Activated CD4-positive, alpha-beta T cell treated with anti-CD3 and anti-CD28 coated beads, Interleukin-2, amount 10 ng/mL, durations not matched to agents 7 days and 5 days (primary cell): ENCODE measurements at regions of chr17 and their contacts with region 1.

Region 1: DNA sequence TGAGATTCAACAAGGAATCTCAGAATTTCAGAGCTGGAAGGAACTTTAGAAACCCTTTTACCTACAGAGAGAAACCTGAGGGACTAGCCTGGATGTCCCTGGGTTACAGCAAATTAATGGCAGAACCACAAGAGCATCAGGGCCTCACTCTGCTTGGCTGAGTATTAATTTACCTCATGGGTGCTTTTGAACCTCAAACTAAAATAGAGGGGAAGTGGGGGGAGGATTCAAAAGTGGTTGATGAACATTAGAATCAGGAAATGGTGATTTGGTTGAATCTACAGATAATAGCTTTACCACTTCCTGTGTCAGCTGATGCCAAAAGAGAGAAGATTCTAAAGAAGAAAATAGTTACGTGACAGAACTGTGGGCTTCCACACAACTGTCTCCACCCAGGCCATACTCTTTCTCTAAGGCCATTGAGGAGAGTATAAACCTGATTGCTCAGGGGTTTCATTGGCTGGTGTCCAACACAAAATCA is 11.3 kb upstream of the SKAP1 start:
- DNase-seq: peak; percentile 69
- H3K4me3 Mint-ChIP-seq: peak overlapping the region; percentile 65
- H3K27ac Mint-ChIP-seq: peak overlapping the region; percentile 95
- H3K4me1 Mint-ChIP-seq: peaks cover 92% of the 10 kb centered on the region
- H3K27me3 Mint-ChIP-seq: no peaks in the 10 kb centered on the region

Region 2: DNA sequence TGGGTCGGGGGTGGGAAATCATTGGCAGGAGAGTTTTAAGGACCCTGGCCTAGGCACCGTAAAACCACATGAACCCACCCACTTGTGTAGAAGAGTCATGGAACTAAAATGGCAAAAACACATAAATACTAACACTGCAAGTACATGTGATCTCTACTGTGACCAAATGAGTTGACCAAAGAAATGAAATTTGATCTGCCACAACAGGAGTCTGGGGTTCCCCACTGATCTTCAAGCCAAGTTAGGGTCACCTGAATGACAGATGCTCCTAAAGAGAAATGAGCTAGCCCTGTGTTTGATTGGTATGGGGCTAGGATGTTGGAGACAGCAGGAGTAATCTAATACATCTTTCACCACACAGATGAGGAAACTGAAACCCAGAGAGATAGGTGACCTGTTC is 10.2 kb after region 1 on chr17:
- CTCF ChIA-PET with region 1: interaction called, 29 read pairs
- POLR2A ChIA-PET with region 1: interaction called, 3 read pairs
- DNase-seq: no peak
- H3K4me3 Mint-ChIP-seq: no peak overlapping the region
- H3K27ac Mint-ChIP-seq: peak overlapping the region; percentile 62
- H3K4me1 Mint-ChIP-seq: peaks cover 65% of the 10 kb centered on the region
- H3K27me3 Mint-ChIP-seq: no peaks in the 10 kb centered on the region

Region 3: DNA sequence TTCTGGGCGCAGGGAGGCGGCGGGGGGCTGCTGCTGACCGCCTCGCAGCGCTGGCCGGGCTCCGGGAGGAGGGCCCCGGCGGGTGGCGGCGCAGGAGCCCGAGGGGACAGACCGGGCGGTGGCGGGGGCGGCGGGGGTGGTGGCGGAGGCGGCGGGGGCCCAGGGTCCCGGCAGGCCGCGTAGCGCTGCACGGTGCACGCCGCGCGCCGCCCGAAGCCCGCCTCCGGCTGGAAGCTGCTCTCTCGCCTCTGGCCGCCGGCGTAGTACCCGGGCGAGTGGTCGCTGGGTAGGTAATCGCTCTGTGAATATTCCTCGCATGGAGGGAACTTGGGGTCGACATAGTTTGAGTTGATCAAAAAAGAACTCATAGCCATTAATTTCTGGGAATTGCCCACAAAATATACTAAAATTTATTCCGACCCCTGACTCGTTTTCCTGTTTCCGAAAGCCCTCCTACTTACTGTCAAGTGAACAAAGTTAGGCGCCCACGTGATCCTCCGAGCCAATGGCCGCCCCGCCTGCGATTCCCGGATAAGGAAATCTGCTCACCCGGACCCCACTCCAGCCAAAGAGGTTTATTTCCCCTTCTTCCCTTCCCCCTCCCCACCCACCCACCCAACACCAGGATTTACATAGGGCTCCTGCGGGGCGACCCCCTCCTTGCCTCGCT is 136.8 kb after region 1 on chr17 and contains the start of gene HOXB4:
- CTCF ChIA-PET with region 1: no interaction called
- POLR2A ChIA-PET with region 1: no interaction called
- DNase-seq: peak; percentile 76
- H3K4me3 Mint-ChIP-seq: peak within 1 kb of the TSS; percentile 86
- H3K27ac Mint-ChIP-seq: peak within 1 kb of the TSS; percentile 88
- H3K4me1 Mint-ChIP-seq: peaks cover 67% of the 10 kb centered on the region
- H3K27me3 Mint-ChIP-seq: peaks cover 56% of the 10 kb centered on the region
- total RNA-seq, gene HOXB4: 3.3 to 3.6 TPM